Heart right ventricle (tissue), 16 donors: ENCODE measurements at regions of chr4 and their contacts with region 1.

Region 1: DNA sequence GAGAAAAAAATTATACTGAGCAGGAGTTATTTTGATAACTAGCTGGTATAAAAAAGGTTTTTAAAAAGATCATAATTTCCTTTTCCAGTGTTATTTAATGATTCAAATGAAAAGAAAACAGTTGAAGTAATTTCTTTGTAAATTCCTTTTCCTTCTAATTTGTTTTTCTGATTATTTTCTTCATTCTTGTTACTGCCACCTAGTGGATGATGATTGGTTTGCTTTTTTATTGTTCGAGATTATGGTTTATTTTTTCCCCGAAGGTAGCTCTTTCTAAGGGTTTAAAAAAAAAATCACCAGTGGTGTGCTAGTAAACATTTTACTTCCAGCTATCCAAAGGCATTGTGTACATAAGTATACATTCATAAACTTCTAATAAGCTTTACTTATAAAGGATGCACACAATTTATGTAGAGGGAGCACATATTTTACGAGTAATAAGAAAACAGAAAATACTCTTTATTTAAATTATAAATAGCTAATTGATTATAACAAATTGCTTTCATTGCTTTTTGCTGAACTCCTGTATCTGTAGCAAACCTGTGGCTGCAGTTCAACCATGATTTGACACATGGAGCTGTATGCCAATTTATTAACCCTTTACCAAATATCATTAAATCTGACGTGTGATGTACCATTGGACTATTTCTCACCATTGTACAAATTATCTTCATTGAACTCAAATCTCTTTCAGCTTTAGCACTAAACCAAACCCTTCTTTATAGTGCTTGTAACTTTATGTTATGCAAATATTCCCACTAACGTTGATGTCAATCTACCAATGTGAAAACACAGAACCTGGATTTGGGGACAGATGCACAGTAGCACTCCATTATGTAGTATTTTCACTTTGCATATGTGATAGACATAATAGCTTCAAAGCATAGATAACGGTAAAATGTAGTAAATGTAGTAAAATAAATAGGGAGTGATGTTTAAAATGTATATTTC is 97.8 kb upstream of the ANK2 start:
- DNase-seq: no peak
- ATAC-seq: no peak
- H3K4me3 ChIP-seq: no peak overlapping the region
- H3K27ac ChIP-seq: no peak overlapping the region
- H3K4me1 ChIP-seq: peaks cover 0 to 6% (median 0%) of the 10 kb centered on the region in 9 donors
- H3K27me3 ChIP-seq: no peaks in the 10 kb centered on the region
- CTCF ChIP-seq: peak in 8 of 9 donors; percentile 24 to 71 (median 62)

Region 2: GRCh38 chr4:113080050-113080449 is 128.4 kb after region 1 on chr4:
- intact Hi-C with region 1: loop called in 1 of 10 experiments (anchors 10 kb)
- DNase-seq: no peak
- ATAC-seq: no peak
- H3K4me3 ChIP-seq: no peak overlapping the region
- H3K27ac ChIP-seq: no peak overlapping the region
- H3K4me1 ChIP-seq: no peaks in the 10 kb centered on the region
- H3K27me3 ChIP-seq: no peaks in the 10 kb centered on the region
- CTCF ChIP-seq: no peak